AG04449 (cell line): ENCODE measurements at regions of chr2 and their contacts with region 1.

Region 1: GRCh38 chr2:20642055-20642971 is 8.6 kb downstream of the HS1BP3 start:
- DNase-seq: no peak
- H3K4me3 ChIP-seq: no peak overlapping the region
- CTCF ChIP-seq: peak; percentile 95

Region 2: DNA sequence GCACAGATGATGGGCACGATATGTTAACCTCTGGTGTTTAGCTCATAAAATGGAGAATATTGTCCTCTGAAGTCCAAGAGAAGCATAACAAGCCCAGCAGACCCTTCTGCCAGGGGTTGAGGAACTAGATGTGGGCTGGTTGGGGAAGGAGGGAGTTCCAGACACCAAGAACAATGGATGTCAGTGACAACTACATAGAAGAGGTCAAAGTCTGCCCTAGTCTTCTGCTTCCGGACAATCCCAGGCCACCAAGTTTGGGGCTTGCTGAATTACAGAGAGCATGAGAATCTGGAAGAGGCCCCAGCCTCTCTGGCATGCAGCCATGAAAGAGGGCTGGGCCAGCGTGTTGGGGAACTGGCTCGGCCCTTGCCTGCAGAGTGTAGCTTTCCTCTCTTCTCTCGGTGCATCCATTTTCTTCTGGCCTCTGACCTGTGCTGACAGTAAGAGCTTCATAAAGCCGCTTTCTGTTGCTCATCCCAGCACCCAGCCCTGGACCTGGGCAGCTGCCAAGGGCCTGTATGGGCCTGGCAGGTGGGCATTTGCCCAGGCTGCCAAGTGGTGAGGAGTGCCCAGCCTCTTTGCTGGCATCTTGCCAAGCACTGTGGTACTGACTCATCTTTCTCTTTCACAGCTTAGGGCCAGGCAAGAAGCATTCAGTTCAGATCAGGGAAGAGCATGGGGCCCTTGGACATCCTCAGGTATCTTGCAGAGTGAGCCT is 576.3 kb before region 1 on chr2:
- CTCF ChIA-PET with region 1: no interaction called
- POLR2A ChIA-PET with region 1: no interaction called
- DNase-seq: no peak
- H3K4me3 ChIP-seq: no peak overlapping the region
- CTCF ChIP-seq: no peak

Region 3: GRCh38 chr2:20097879-20098714 is 544.2 kb before region 1 on chr2:
- CTCF ChIA-PET with region 1: no interaction called
- POLR2A ChIA-PET with region 1: no interaction called
- DNase-seq: peak; percentile 47
- H3K4me3 ChIP-seq: no peak overlapping the region
- CTCF ChIP-seq: peak; percentile 93

Region 4: DNA sequence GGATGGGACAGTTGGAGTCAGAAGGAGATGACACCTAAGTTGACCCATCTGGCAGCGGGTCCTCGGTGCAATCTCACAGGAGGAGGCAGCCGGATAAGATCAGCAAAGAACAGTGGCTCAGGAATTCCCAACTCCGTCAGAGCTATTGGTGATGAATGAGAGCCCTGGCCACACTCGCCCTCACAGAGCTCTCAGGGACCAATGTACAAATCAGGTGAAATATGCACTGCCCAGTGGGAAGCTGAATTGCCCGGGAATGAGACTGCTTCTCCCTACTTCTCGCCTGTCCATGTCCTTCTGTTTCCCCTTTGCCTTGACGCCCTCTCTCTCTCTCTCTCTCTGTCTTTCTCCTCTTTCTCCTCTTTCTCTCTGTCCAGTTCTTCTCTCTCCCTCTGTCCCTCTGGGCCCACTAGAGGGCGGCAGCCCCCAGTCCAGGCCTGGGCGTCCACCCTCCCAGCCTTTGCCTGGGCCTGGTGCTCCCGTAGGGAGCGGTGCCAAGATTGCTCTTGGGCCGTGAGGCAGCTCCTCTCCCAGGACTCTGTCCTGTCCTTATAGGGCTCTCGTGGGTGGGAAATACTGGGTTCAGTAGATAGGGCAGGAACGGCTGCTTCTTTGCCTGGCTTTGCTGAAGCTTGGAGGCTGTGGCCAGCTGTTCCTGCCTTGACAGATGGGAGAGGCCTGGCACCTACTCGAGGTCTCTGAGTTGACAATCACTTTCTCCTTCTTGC is 263.4 kb before region 1 on chr2:
- CTCF ChIA-PET with region 1: interaction called, 58 read pairs
- POLR2A ChIA-PET with region 1: no interaction called
- DNase-seq: no peak
- H3K4me3 ChIP-seq: no peak overlapping the region
- CTCF ChIP-seq: peak; percentile 91

Region 5: DNA sequence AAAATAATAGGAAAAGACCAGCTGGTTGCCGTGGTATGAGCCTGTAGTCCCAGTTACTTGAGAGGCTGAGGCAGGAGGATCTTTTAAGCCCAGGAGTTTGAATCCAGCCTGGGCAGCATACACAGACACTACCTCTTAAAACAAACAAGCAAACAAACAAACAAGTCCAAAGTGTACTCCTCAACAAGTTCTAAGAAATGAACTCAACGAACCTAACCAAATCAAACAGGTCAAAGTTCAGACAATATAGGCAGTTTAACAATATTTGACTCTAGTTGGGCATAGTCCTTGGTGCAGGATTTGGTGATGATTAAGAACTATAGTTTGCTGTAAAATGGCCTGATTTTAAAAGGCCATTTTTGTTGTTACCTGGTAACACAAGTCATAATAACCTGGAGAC is 237.4 kb before region 1 on chr2:
- CTCF ChIA-PET with region 1: interaction called, 161 read pairs
- POLR2A ChIA-PET with region 1: no interaction called
- DNase-seq: no peak
- H3K4me3 ChIP-seq: no peak overlapping the region
- CTCF ChIP-seq: no peak

Region 6: GRCh38 chr2:20419007-20419576 is 223.2 kb before region 1 on chr2:
- CTCF ChIA-PET with region 1: interaction called, 161 read pairs
- POLR2A ChIA-PET with region 1: no interaction called
- DNase-seq: no peak
- H3K4me3 ChIP-seq: no peak overlapping the region
- CTCF ChIP-seq: no peak

Region 7: DNA sequence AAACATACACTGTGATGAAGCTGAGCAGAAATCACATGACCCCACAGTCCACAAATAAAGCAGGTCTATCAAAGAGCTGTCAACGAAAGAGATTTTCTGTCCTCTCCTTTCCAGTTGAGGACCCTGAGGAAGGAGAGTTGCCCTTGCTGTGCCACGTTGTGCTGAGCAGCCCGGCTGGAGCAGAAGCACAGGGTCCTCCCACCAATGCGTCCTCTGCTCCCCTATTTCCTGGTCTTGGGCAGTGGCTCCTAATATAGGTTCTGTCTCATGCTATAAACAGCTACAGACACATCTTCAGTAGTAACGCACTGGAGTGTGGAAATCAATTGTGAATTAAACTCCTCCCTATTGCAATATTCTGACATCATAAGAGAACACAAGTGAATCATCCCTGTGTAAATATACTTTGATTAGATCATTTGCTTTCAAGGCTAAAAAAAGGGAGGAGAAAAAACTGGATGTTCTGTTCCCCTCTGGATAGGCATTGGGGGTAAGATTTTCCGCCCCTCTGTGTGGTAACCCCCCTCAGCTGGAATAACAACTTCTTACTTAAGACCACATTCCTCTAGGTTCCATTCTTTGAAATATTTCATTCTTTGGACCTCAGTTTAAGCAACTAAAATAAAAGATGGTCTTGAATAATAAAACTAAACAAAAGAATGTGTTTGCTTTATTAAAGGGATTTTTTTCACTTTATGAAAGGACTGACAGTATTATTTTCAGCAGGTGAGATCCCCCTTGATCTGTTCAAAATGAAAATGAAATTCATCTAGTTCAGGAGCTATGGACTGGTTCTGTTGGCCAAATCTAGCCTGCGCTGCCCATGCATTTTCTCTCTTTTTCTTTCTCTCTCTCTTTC is 203.8 kb before region 1 on chr2:
- CTCF ChIA-PET with region 1: interaction called, 394 read pairs
- POLR2A ChIA-PET with region 1: interaction called, 4 read pairs
- DNase-seq: peak; percentile 46
- H3K4me3 ChIP-seq: no peak overlapping the region
- CTCF ChIP-seq: no peak

Region 8: DNA sequence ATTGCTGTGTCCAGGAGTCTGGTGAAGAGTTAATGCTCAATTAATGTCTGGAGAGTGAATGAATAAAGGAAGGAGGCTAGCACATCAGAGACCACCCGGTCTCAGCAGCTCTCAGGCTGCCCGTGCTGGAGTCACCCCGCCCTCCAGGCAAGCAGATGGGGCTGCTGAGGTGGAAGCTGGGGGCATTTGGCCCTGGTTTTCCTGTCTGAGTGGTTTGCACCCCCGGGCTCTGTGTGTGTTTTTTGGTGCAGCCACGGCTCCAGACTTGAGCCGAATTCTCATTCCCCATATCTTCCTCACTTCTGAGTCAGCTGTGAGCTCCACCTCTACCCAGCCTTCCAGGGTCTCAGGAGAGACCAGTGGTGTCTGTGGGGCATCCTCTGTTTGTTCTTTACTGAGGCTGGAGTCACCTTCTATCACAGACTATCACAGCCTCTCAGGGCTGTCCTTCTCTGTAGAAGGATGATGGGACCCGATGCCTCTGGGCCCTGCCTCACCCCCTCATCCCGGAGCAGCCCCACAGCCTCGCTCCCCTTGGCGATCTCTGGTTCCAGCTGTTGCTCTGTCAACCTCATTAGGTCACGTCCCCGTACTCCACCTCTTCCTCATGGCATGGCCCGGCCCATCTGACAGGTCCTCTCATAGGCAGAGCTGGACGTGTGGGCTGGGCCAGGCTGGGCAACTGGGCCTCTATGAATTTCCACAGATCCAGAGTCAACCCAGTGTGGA is 52.2 kb before region 1 on chr2:
- CTCF ChIA-PET with region 1: no interaction called
- POLR2A ChIA-PET with region 1: no interaction called
- DNase-seq: no peak
- H3K4me3 ChIP-seq: no peak overlapping the region
- CTCF ChIP-seq: no peak

Region 9: GRCh38 chr2:20625491-20626391 is 16.6 kb before region 1 on chr2:
- CTCF ChIA-PET with region 1: interaction called, 25 read pairs
- POLR2A ChIA-PET with region 1: no interaction called
- DNase-seq: no peak
- H3K4me3 ChIP-seq: no peak overlapping the region
- CTCF ChIP-seq: no peak

Region 10: GRCh38 chr2:21165350-21165749 is 523.0 kb after region 1 on chr2:
- CTCF ChIA-PET with region 1: no interaction called
- POLR2A ChIA-PET with region 1: no interaction called
- DNase-seq: no peak
- H3K4me3 ChIP-seq: no peak overlapping the region
- CTCF ChIP-seq: no peak